ENCODE measurements at regions of chr15 and their contacts with region 1.

Region 1: DNA sequence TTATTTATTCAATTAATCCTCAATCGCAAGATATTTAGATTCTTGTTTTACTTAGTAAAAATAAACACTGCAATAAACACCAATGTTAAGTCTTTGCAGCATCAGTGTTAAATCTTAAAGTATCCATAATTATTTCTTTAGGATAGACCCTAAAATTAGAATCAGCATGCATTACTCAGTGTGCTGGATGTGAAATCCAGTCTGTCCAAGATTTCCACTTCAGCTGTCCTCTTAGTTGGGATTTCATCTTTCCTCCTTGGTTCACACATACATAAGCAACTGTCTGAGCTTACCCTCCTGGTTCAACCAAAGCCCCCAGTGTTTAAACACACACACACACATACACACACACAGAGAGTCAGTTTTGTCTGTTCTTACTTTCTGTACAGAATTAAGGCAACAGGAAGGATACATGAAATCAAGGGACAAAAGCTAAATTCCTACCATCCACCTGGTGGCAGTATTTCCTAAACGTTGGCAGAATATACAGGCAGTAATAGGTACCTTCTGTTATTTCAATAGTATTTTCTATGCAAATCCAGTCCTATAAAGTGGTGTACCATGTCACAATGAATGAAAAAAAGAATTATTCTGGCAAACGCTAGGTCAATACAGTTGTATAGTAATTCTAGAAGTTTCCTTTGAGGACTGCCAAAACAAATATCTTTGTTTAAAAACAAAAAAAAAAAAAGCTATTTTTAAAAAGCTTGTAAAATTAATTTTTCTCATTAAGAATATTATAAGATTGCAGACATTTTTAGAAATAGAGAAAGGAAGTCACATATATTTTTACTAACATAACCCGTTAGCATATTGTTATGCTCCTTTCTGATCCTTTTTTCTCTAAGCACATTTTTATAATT is 27.3 kb upstream of the DMXL2 start:
- DNase-seq: no peak
- ATAC-seq: peak; percentile 83
- H3K4me3 Mint-ChIP-seq: no peak overlapping the region
- H3K27ac Mint-ChIP-seq: no peak overlapping the region
- H3K4me1 Mint-ChIP-seq: peaks cover 6% of the 10 kb centered on the region
- H3K27me3 Mint-ChIP-seq: no peaks in the 10 kb centered on the region
- CTCF ChIP-seq: peak; percentile 50

Region 2: DNA sequence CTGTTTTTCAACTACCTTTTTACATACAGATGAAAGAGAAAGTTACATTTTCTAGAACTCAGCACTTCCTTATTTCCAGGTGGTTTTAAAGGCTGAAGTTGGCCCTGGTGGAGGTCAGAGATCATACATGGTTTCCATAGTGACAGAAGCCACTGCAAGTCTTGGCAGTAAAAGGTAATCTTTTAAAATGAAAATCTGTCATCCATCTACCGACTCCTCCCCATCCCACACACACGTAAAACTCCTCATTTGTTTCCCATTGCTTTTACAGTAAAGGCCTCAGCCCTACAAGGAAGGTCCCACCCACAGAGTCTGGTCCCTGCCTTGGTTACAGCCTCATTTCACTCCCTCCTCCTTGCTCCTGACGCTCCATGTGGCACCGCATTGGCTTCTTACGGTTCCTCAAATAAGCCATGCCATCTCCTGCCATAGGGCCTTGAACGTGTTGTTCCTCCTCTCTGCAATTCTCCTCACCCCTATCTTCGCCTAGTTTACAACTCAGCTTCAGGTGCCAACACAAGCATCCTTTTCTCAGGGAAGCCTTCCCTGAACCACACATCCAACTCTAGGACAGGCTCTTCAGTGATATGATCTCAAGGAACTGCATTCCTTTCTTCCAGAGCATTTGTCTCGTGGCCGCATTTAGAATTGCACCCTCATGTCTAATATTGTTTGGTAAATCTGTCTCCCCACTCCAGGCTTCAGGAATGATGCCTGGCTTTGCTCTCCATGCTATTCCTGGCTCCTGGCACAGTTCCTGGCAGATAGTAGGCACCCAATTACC is 314.2 kb before region 1 on chr15:
- CTCF ChIA-PET with region 1: no interaction called
- POLR2A ChIA-PET with region 1: no interaction called
- DNase-seq: no peak
- ATAC-seq: no peak
- H3K4me3 Mint-ChIP-seq: no peak overlapping the region
- H3K27ac Mint-ChIP-seq: no peak overlapping the region
- H3K4me1 Mint-ChIP-seq: no peaks in the 10 kb centered on the region
- H3K27me3 Mint-ChIP-seq: peaks cover 30% of the 10 kb centered on the region
- CTCF ChIP-seq: no peak

Region 3: DNA sequence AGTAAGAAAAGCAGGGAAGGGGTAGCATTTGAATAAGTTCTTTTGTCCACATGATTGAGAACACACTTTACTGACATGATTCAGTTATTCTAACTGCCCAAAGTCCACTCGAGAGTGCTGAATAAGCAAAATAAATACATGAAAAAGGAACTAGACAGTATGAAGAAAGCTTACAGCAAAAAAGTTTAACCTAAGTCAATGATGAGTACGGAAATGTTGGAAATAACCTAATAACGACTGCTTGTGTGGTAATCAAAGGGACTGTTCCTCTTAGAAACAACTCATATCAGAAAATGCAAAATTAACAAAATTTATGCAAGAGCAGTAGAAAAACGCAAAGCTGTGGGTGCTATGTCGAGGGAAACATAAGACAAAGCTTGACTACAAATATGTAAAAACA is 63.9 kb before region 1 on chr15:
- CTCF ChIA-PET with region 1: no interaction called
- POLR2A ChIA-PET with region 1: no interaction called
- DNase-seq: no peak
- ATAC-seq: no peak
- H3K4me3 Mint-ChIP-seq: no peak overlapping the region
- H3K27ac Mint-ChIP-seq: no peak overlapping the region
- H3K4me1 Mint-ChIP-seq: no peaks in the 10 kb centered on the region
- H3K27me3 Mint-ChIP-seq: peaks cover 13% of the 10 kb centered on the region; the same call in 1 of the 2 replicates
- CTCF ChIP-seq: no peak

Region 4: GRCh38 chr15:51681303-51681963 is 31.5 kb after region 1 on chr15 and contains the start of gene SCG3:
- CTCF ChIA-PET with region 1: interaction called, 16 read pairs
- POLR2A ChIA-PET with region 1: no interaction called
- DNase-seq: peak; percentile 99
- ATAC-seq: peak; percentile 98
- H3K4me3 Mint-ChIP-seq: peak within 1 kb of the TSS; percentile 90
- H3K27ac Mint-ChIP-seq: peak within 1 kb of the TSS; percentile 97
- H3K4me1 Mint-ChIP-seq: peaks cover 6% of the 10 kb centered on the region
- H3K27me3 Mint-ChIP-seq: no peaks in the 10 kb centered on the region
- CTCF ChIP-seq: no peak
- total RNA-seq, gene SCG3: 31.5 to 32.3 TPM (median 32.1 TPM) in 3 replicates

Region 5: DNA sequence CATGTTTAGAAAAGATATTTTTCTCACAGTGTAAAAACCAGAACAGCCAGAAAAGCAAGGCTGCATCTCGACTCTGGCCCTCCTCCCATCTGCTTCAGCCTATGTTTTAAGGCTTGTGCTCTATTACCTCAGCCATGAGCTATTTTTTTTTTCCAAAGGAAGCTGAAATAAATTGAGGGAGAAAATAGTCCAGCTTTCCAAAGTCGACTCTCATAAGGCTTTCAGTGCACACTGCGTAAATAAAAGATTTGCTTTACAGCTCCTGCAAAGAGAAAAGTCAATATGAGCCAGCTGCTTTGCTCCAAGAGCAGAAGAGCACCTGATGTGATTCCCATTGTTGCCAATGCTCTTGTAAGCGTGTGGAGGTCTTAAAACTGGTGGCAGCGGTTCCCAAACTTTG is 58.1 kb after region 1 on chr15:
- CTCF ChIA-PET with region 1: no interaction called
- POLR2A ChIA-PET with region 1: no interaction called
- DNase-seq: no peak
- ATAC-seq: no peak
- H3K4me3 Mint-ChIP-seq: no peak overlapping the region
- H3K27ac Mint-ChIP-seq: no peak overlapping the region
- H3K4me1 Mint-ChIP-seq: no peaks in the 10 kb centered on the region
- H3K27me3 Mint-ChIP-seq: no peaks in the 10 kb centered on the region
- CTCF ChIP-seq: no peak

Region 6: GRCh38 chr15:51758645-51759044 is 108.8 kb after region 1 on chr15:
- CTCF ChIA-PET with region 1: interaction called, 12 read pairs
- POLR2A ChIA-PET with region 1: interaction called, 3 read pairs
- DNase-seq: no peak
- ATAC-seq: no peak
- H3K4me3 Mint-ChIP-seq: no peak overlapping the region
- H3K27ac Mint-ChIP-seq: no peak overlapping the region
- H3K4me1 Mint-ChIP-seq: 0 out of 2 replicates have a peak, but pooled peaks cover 4% of the 10 kb centered on the region
- H3K27me3 Mint-ChIP-seq: peaks cover 19% of the 10 kb centered on the region
- CTCF ChIP-seq: no peak